ENCODE measurements at regions of chr19 and their contacts with region 1.

Region 1: DNA sequence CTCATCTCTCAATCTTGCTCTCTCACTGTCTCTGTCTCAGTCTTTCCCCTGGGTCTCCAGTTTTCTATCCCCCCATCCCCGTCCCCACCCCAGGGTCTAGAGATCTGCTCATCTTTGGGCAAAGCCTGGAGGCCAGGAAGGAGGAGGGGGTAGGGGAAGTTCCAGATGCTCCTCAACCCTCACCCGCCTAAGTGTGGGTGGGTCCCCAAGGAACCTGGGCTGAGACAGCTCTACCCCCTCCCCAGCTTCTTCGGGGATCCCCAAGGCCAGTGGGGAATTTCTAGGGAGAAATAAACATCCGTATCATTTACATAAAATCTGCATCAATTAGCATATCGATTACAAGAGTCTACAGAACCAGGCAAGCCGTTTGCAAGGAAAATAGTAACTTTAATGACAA is 31.8 kb upstream of the SEMA6B start:
- DNase-seq: no peak
- H3K4me3 ChIP-seq: no peak overlapping the region
- H3K27ac ChIP-seq: no peak overlapping the region
- H3K4me1 ChIP-seq: no peaks in the 10 kb centered on the region
- H3K27me3 ChIP-seq: peaks cover 79% of the 10 kb centered on the region
- CTCF ChIP-seq: no peak
- EP300 ChIP-seq: no peak
- POLR2A ChIP-seq: no peak

Region 2: DNA sequence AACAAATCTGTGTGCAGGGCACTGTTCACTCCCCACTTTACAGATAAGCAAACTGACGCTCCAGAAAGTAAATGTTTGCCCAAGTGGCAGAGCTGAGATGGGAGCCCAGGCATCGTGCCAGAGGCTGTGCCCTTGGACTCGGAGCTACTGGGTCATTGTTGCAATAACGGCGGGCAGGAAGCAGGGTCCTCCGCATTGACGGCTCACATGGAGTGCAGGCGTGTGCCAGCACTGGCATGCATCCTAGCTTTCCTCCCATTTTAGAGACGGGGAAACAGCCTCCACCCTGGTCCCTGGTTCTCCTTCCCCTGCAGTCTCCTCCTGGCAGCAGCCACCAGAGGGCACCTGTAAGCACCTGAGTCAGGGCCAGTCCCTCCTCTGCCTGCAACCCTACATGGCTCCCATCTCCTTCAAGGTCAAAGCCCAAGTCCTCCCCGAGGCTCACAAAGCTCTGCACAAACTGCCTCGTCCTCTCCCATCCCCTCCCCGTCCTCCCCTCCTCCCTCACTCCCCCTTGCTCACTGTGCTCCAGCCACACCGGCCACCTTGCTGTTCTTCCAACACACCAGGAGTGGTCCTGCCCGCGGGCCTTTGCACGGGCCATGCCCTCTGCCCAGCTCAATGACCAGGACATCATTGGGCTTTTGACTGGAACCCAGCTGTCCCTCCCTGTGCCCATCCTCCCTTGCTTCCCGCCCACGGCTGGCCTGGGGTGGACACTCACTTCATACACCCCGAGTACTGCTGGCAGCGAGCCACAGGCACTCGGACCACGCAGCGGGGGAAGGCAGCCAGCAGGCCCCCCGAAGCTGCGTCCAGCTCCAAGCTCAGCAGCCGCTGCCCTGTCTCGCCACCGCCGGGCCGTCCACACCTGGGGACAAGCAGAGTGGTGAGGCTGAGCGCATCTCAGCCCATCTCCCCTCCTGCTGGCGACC is 43.8 kb before region 1 on chr19:
- in situ Hi-C with region 1: no loop called
- intact Hi-C with region 1: loop called (anchors 1 kb)
- DNase-seq: no peak
- H3K4me3 ChIP-seq: no peak overlapping the region
- H3K27ac ChIP-seq: no peak overlapping the region
- H3K4me1 ChIP-seq: no peaks in the 10 kb centered on the region
- H3K27me3 ChIP-seq: peaks cover 12% of the 10 kb centered on the region
- CTCF ChIP-seq: peak in 2 of 5 experiments; percentile 16 to 27
- EP300 ChIP-seq: no peak
- POLR2A ChIP-seq: no peak

Region 3: GRCh38 chr19:4624733-4625362 is 33.5 kb after region 1 on chr19:
- in situ Hi-C with region 1: no loop called
- intact Hi-C with region 1: no loop called
- DNase-seq: no peak
- H3K4me3 ChIP-seq: no peak overlapping the region
- H3K27ac ChIP-seq: no peak overlapping the region
- H3K4me1 ChIP-seq: no peaks in the 10 kb centered on the region
- H3K27me3 ChIP-seq: peaks cover 36% of the 10 kb centered on the region
- CTCF ChIP-seq: no peak
- EP300 ChIP-seq: no peak
- POLR2A ChIP-seq: no peak